H1 (cell line): ENCODE measurements at regions of chr6 and their contacts with region 1.

Region 1: GRCh38 chr6:121430514-121431460 is 4.7 kb upstream of the GJA1 start:
- DNase-seq: no peak
- H3K4me3 ChIP-seq: peak overlapping the region in 1 of 4 experiments; percentile 50; a peak in 2 of 8 replicates
- H3K27ac ChIP-seq: peak overlapping the region; percentile 36; the same call in 1 of the 2 replicates
- H3K4me1 ChIP-seq: peaks cover 0 to 13% (median 3%) of the 10 kb centered on the region in 4 experiments; a peak in 4 of 7 replicates
- H3K27me3 ChIP-seq: no peaks in the 10 kb centered on the region
- CTCF ChIP-seq: peak in 2 of 3 experiments; percentile 41 to 68; a peak in 2 of 4 replicates
- EP300 ChIP-seq: no peak
- POLR2A ChIP-seq: no peak
- RAD21 ChIP-seq: peak; percentile 88 to 93

Region 2: GRCh38 chr6:121443971-121444541 is 13.3 kb after region 1 on chr6:
- CTCF ChIA-PET with region 1: interaction called, 14 read pairs
- POLR2A ChIA-PET with region 1: interaction called, 13 read pairs
- DNase-seq: no peak
- H3K4me3 ChIP-seq: peak overlapping the region in 1 of 4 experiments; percentile 46; a peak in 2 of 8 replicates
- H3K27ac ChIP-seq: no peak overlapping the region
- H3K4me1 ChIP-seq: peaks cover 0 to 18% (median 9%) of the 10 kb centered on the region in 4 experiments; a peak in 5 of 7 replicates
- H3K27me3 ChIP-seq: no peaks in the 10 kb centered on the region
- CTCF ChIP-seq: no peak
- EP300 ChIP-seq: no peak
- POLR2A ChIP-seq: peak in 1 of 2 experiments; percentile 28; a peak in 1 of 3 replicates
- RAD21 ChIP-seq: no peak

Region 3: GRCh38 chr6:122033539-122034181 is 602.9 kb after region 1 on chr6:
- CTCF ChIA-PET with region 1: interaction called, 12 read pairs
- POLR2A ChIA-PET with region 1: no interaction called
- DNase-seq: peak in 1 of 2 experiments; percentile 29
- H3K4me3 ChIP-seq: no peak overlapping the region
- H3K27ac ChIP-seq: no peak overlapping the region
- H3K4me1 ChIP-seq: peaks cover 0 to 3% (median under 1%) of the 10 kb centered on the region in 4 experiments; a peak in 1 of 7 replicates
- H3K27me3 ChIP-seq: no peaks in the 10 kb centered on the region
- CTCF ChIP-seq: peak in 2 of 3 experiments; percentile 50 to 59; a peak in 2 of 4 replicates
- EP300 ChIP-seq: no peak
- POLR2A ChIP-seq: no peak
- RAD21 ChIP-seq: peak; percentile 90 to 91

Region 4: GRCh38 chr6:123094795-123095194 is 1664.0 kb after region 1 on chr6:
- CTCF ChIA-PET with region 1: no interaction called
- POLR2A ChIA-PET with region 1: no interaction called
- DNase-seq: no peak
- H3K4me3 ChIP-seq: no peak overlapping the region
- H3K27ac ChIP-seq: no peak overlapping the region
- H3K4me1 ChIP-seq: no peaks in the 10 kb centered on the region
- H3K27me3 ChIP-seq: no peaks in the 10 kb centered on the region
- CTCF ChIP-seq: no peak
- EP300 ChIP-seq: no peak
- POLR2A ChIP-seq: no peak
- RAD21 ChIP-seq: no peak